Caco-2 (cell line): ENCODE measurements at regions of chrX and their contacts with region 1.

Region 1: DNA sequence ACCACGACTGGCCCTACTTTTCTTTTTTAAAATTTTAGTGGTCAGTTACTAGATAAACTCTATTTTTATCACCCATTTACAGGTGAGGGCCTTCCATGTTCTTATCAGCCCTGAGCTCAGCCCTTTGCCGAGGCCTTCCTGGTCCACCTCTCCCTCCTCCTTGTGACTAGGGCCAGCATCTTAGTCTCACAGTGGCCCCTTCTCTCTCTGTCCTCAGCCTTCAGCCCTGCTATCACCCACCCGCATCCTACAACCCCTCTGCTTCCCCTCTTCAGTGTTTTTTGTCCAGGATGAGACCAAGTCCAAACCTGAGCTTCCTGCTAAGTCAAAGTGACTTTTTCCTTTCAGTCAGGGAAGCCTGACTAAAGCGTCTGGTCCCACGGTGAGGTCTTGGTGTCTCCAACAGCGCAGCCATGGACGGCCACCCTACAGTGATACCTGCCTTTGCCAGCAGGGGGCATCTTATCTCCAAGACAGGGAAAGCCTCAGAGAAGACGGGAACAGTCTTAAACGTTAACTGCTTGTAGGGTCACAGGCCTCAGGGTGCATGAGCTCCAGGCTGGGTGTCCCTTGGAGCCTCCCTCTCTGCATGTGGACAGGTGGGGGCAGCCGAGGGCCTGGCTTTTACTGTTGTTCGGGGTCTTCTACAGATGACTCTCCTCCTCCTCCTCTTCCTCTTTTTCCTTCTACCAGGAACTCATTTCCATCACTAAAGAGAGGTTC is 11.7 kb upstream of the GAGE10 start:
- DNase-seq: peak; percentile 51 to 68
- H3K4me3 ChIP-seq: no peak overlapping the region
- H3K4me3 Mint-ChIP-seq: no peak overlapping the region
- H3K27ac Mint-ChIP-seq: no peak overlapping the region
- H3K4me1 ChIP-seq: no peaks in the 10 kb centered on the region
- H3K4me1 Mint-ChIP-seq: peaks cover 6% of the 10 kb centered on the region
- H3K27me3 ChIP-seq: no peaks in the 10 kb centered on the region
- H3K27me3 Mint-ChIP-seq: peaks cover 4% of the 10 kb centered on the region
- CTCF ChIP-seq: peak; percentile 52 to 54

Region 2: DNA sequence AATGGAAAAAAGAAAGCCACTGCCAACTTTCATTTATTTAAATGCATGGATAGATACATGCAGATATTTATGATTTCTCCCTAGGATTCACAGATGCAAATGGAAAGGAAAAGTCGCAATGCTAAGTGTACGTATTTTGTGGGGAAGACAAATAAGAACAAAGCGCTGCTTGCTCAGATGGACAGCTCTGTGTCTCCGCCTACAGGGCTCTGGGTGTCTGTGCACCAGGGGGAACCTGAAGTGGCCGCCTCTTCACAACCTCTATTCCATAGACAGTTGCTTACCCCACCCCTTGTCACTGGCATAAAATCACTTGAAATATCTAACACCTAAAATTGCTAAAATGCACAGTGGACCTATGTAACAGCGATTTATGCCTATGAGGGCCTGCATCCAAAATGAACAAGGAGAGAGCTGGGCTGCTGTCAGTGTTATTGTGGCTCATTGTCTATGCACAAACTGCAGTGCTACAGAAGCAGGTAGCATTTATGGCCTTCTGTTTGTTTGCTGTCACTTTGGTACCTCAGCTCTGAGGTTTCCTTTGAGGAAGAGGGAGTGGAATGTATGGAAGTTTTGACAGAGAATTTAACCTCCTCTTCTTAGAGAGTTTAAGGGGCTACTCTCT is 462.6 kb after region 1 on chrX:
- CTCF ChIA-PET with region 1: no interaction called
- POLR2A ChIA-PET with region 1: no interaction called
- intact Hi-C with region 1: loop called (anchors 10 kb)
- DNase-seq: peak in 1 of 2 experiments; percentile 35
- H3K4me3 ChIP-seq: no peak overlapping the region
- H3K4me3 Mint-ChIP-seq: no peak overlapping the region
- H3K27ac Mint-ChIP-seq: no peak overlapping the region
- H3K4me1 ChIP-seq: peaks cover 11% of the 10 kb centered on the region; the same call in 1 of the 2 replicates
- H3K4me1 Mint-ChIP-seq: no peaks in the 10 kb centered on the region
- H3K27me3 ChIP-seq: no peaks in the 10 kb centered on the region
- H3K27me3 Mint-ChIP-seq: no peaks in the 10 kb centered on the region
- CTCF ChIP-seq: peak; percentile 13 to 34

Region 3: GRCh38 chrX:49840679-49841078 is 548.9 kb after region 1 on chrX:
- CTCF ChIA-PET with region 1: interaction called, 6 read pairs
- POLR2A ChIA-PET with region 1: no interaction called
- intact Hi-C with region 1: loop called (anchors 1 kb)
- DNase-seq: peak; percentile 80 to 88
- H3K4me3 ChIP-seq: no peak overlapping the region
- H3K4me3 Mint-ChIP-seq: no peak overlapping the region
- H3K27ac Mint-ChIP-seq: no peak overlapping the region
- H3K4me1 ChIP-seq: peaks cover 8% of the 10 kb centered on the region; the same call in 1 of the 2 replicates
- H3K4me1 Mint-ChIP-seq: no peaks in the 10 kb centered on the region
- H3K27me3 ChIP-seq: no peaks in the 10 kb centered on the region
- H3K27me3 Mint-ChIP-seq: no peaks in the 10 kb centered on the region
- CTCF ChIP-seq: peak; percentile 33 to 58